Endothelial cell of umbilical vein (primary cell): ENCODE measurements at regions of chr2 and their contacts with region 1.

Region 1: DNA sequence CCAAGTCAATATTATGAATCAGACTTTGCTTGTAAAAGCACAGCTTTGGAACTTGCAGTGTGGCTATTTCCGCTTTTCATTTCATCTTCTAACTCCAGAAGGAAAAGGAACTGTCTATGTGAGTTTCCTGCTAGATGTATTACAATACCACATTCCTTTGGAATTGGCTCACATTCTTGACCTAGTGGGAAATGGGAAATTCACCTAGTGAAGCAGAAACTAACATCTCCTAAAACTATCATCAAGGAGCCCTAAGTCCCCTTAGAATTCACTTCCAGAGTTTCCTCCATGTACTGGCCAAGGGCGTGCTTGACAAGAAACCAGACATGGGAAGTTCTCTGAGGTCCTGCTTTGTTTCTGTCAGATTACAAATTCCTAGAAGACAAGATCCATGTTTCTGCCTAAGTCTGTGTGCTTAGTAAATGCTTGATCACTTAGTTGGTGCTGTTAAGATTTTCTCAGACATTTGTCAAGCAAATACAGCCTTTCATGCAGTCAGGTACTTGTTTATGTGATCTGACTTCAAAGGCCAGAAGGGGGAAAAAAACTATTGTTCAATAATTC is 275.7 kb upstream of the FN1 start:
- DNase-seq: peak; percentile 92
- H3K4me3 ChIP-seq: no peak overlapping the region
- H3K27ac ChIP-seq: peak overlapping the region; percentile 98
- H3K4me1 ChIP-seq: peaks cover 51% of the 10 kb centered on the region
- H3K27me3 ChIP-seq: no peaks in the 10 kb centered on the region
- CTCF ChIP-seq: no peak
- POLR2A ChIP-seq: peak; percentile 82

Region 2: DNA sequence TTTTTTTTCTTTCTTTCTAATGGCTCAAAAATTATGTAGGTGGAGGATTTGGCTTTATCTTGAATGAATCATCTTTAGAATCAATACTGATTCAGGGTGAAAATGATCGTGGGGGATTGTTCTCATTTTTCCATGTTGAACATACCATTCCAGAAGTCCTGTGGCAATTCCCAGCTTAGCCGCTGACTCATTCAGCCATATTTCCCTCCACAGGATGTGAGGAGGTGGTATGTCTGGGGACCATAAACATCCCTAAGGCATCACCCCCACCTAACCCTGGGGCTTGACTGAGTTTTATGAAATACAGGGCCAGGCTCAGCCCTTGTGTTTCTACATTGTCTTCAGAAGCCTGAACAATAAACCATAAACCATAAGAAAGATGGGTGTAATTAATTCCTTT is 183.0 kb before region 1 on chr2:
- CTCF ChIA-PET with region 1: no interaction called
- POLR2A ChIA-PET with region 1: no interaction called
- dilution Hi-C with region 1: no loop called
- intact Hi-C with region 1: loop called (anchors 2 kb)
- DNase-seq: peak; percentile 98
- H3K4me3 ChIP-seq: no peak overlapping the region
- H3K27ac ChIP-seq: peak overlapping the region; percentile 99
- H3K4me1 ChIP-seq: peaks cover 44% of the 10 kb centered on the region
- H3K27me3 ChIP-seq: no peaks in the 10 kb centered on the region
- CTCF ChIP-seq: no peak
- POLR2A ChIP-seq: no peak

Region 3: GRCh38 chr2:215626812-215627281 is 84.7 kb before region 1 on chr2:
- CTCF ChIA-PET with region 1: no interaction called
- POLR2A ChIA-PET with region 1: no interaction called
- dilution Hi-C with region 1: no loop called
- intact Hi-C with region 1: loop called (anchors 1 kb)
- DNase-seq: peak; percentile 79
- H3K4me3 ChIP-seq: peak overlapping the region in 1 of 3 experiments; percentile 27
- H3K27ac ChIP-seq: peak overlapping the region; percentile 91
- H3K4me1 ChIP-seq: peaks cover 33% of the 10 kb centered on the region
- H3K27me3 ChIP-seq: no peaks in the 10 kb centered on the region
- CTCF ChIP-seq: no peak
- POLR2A ChIP-seq: no peak

Region 4: DNA sequence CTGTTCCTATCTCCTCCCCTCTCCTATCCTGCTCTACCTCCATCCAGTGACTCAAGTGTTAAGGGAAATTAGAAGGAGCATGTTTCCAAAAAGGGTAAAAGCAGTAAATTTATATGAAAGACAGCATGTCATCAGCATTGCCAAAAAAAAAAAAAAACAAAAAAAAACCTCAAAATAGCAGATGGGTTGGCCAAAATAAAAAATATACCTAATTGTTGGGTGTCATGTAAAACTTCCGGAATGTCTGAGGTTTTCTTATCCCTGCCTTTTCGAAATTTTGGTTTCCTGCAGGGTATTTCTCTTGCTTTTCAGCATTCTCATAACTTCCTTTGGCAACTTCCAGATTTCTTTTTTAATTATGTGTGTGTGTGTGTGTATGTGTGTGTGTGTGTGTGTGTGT is 34.1 kb before region 1 on chr2:
- CTCF ChIA-PET with region 1: no interaction called
- POLR2A ChIA-PET with region 1: no interaction called
- dilution Hi-C with region 1: no loop called
- intact Hi-C with region 1: no loop called
- DNase-seq: no peak
- H3K4me3 ChIP-seq: no peak overlapping the region
- H3K27ac ChIP-seq: no peak overlapping the region
- H3K4me1 ChIP-seq: no peaks in the 10 kb centered on the region
- H3K27me3 ChIP-seq: no peaks in the 10 kb centered on the region
- CTCF ChIP-seq: no peak
- POLR2A ChIP-seq: no peak

Region 5: GRCh38 chr2:215698566-215698965 is 13.0 kb before region 1 on chr2:
- CTCF ChIA-PET with region 1: interaction called, 11 read pairs
- POLR2A ChIA-PET with region 1: interaction called, 4 read pairs
- dilution Hi-C with region 1: no loop called
- intact Hi-C with region 1: loop called (anchors 1 kb)
- DNase-seq: no peak
- H3K4me3 ChIP-seq: no peak overlapping the region
- H3K27ac ChIP-seq: no peak overlapping the region
- H3K4me1 ChIP-seq: peaks cover 29% of the 10 kb centered on the region
- H3K27me3 ChIP-seq: no peaks in the 10 kb centered on the region
- CTCF ChIP-seq: no peak
- POLR2A ChIP-seq: no peak

Region 6: DNA sequence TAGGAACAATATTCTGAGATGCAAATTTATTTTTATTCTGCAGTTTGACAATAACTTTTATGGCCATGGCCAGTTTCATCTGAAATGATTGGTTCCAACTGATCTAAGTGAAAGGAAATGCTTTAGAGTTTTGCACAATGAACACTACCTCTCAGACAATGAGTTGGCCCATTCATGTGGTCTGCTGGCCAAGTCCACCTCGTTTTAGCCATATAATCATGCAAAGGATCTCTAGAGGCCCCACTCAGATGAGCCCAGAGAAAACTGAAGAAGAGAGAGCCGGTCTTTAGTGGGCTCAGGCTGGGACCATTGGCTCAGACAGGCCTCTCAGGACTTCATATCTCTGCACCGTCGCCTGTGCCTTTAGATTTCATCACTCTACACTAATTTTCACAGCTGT is 47.1 kb after region 1 on chr2:
- CTCF ChIA-PET with region 1: no interaction called
- POLR2A ChIA-PET with region 1: no interaction called
- dilution Hi-C with region 1: no loop called
- intact Hi-C with region 1: loop called (anchors 1 kb)
- DNase-seq: peak; percentile 87
- H3K4me3 ChIP-seq: no peak overlapping the region
- H3K27ac ChIP-seq: peak overlapping the region; percentile 69
- H3K4me1 ChIP-seq: peaks cover 39% of the 10 kb centered on the region
- H3K27me3 ChIP-seq: no peaks in the 10 kb centered on the region
- CTCF ChIP-seq: no peak
- POLR2A ChIP-seq: no peak

Region 7: GRCh38 chr2:215773728-215774127 is 62.2 kb after region 1 on chr2:
- CTCF ChIA-PET with region 1: no interaction called
- POLR2A ChIA-PET with region 1: no interaction called
- dilution Hi-C with region 1: no loop called
- intact Hi-C with region 1: no loop called
- DNase-seq: no peak
- H3K4me3 ChIP-seq: no peak overlapping the region
- H3K27ac ChIP-seq: no peak overlapping the region
- H3K4me1 ChIP-seq: peaks cover 32% of the 10 kb centered on the region
- H3K27me3 ChIP-seq: no peaks in the 10 kb centered on the region
- CTCF ChIP-seq: no peak
- POLR2A ChIP-seq: no peak

Region 8: GRCh38 chr2:215920244-215921100 is 208.9 kb after region 1 on chr2:
- CTCF ChIA-PET with region 1: no interaction called
- POLR2A ChIA-PET with region 1: interaction called, 4 read pairs
- dilution Hi-C with region 1: no loop called
- intact Hi-C with region 1: loop called (anchors 2 kb)
- DNase-seq: peak; percentile 87
- H3K4me3 ChIP-seq: no peak overlapping the region
- H3K27ac ChIP-seq: no peak overlapping the region
- H3K4me1 ChIP-seq: peaks cover 12% of the 10 kb centered on the region
- H3K27me3 ChIP-seq: no peaks in the 10 kb centered on the region
- CTCF ChIP-seq: peak; percentile 76 to 93
- POLR2A ChIP-seq: no peak